ENCODE measurements at regions of chr9 and their contacts with region 1.

Region 1: GRCh38 chr9:12329623-12329985 is 363.6 kb upstream of the TYRP1 start:
- DNase-seq: no peak
- ATAC-seq: no peak
- H3K4me3 ChIP-seq: no peak overlapping the region
- H3K27ac ChIP-seq: no peak overlapping the region
- H3K4me1 ChIP-seq: peaks cover 7% of the 10 kb centered on the region; the same call in 1 of the 2 replicates
- H3K27me3 ChIP-seq: no peaks in the 10 kb centered on the region
- CTCF ChIP-seq: no peak
- EP300 ChIP-seq: no peak
- POLR2A ChIP-seq: no peak
- RAD21 ChIP-seq: no peak

Region 2: DNA sequence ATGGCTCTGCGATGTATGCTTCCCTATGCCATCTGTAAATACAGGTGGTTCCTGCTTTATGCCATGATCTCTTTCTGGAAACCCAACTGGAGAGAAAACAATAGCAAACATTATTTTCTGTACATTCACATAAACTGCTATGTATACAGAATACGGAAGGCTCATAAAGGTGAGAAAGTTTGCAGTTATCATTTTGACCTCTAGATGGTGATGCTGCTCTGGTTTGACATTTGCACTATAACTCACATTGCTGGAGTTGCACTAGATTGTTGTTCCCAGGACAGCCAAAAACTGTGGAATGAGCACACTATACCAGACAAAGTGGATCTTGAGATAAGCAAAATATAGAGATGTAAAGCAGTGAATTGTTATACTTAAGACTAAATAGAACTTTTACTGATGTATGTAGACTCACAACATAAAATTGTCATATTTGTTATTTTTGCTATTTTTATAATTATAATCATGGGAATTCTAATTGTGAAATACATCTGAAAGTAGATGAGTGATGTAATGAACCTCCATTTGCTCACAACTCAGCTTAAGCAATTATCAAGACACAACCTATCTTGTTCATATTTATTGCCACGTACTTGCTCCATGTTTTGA is 1963.3 kb before region 1 on chr9:
- CTCF ChIA-PET with region 1: interaction called, 11 read pairs
- POLR2A ChIA-PET with region 1: no interaction called
- in situ Hi-C with region 1: no loop called
- intact Hi-C with region 1: loop called (anchors 1 kb)
- DNase-seq: peak; percentile 32
- ATAC-seq: peak; percentile 89
- H3K4me3 ChIP-seq: no peak overlapping the region
- H3K27ac ChIP-seq: no peak overlapping the region
- H3K4me1 ChIP-seq: no peaks in the 10 kb centered on the region
- H3K27me3 ChIP-seq: no peaks in the 10 kb centered on the region
- CTCF ChIP-seq: peak; percentile 76
- EP300 ChIP-seq: no peak
- POLR2A ChIP-seq: no peak
- RAD21 ChIP-seq: 0 out of 2 replicates have a peak, but pooled peaks have one; percentile 19

Region 3: DNA sequence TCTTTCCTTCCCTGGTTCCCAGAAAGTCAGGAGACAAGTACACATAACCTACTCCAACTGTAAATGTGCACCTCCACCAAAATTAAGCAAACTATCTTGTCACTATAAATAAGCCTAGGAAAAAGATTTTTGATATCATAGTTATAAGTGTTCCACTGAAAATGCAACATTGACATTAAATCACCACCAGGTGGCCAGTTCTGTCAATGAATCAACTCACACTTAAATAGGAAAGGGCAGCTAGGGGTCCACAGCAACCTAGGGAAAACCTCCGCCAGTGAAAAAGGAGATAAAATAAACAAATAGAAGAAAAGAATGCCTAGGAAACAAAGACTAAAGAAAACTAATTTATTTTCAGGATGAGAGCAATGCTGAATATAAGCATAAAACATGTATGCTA is 1473.8 kb before region 1 on chr9:
- CTCF ChIA-PET with region 1: no interaction called
- POLR2A ChIA-PET with region 1: no interaction called
- in situ Hi-C with region 1: no loop called
- intact Hi-C with region 1: loop called (anchors 5 kb)
- DNase-seq: no peak
- ATAC-seq: no peak
- H3K4me3 ChIP-seq: no peak overlapping the region
- H3K27ac ChIP-seq: no peak overlapping the region
- H3K4me1 ChIP-seq: no peaks in the 10 kb centered on the region
- H3K27me3 ChIP-seq: no peaks in the 10 kb centered on the region
- CTCF ChIP-seq: no peak
- EP300 ChIP-seq: no peak
- POLR2A ChIP-seq: no peak
- RAD21 ChIP-seq: no peak

Region 4: DNA sequence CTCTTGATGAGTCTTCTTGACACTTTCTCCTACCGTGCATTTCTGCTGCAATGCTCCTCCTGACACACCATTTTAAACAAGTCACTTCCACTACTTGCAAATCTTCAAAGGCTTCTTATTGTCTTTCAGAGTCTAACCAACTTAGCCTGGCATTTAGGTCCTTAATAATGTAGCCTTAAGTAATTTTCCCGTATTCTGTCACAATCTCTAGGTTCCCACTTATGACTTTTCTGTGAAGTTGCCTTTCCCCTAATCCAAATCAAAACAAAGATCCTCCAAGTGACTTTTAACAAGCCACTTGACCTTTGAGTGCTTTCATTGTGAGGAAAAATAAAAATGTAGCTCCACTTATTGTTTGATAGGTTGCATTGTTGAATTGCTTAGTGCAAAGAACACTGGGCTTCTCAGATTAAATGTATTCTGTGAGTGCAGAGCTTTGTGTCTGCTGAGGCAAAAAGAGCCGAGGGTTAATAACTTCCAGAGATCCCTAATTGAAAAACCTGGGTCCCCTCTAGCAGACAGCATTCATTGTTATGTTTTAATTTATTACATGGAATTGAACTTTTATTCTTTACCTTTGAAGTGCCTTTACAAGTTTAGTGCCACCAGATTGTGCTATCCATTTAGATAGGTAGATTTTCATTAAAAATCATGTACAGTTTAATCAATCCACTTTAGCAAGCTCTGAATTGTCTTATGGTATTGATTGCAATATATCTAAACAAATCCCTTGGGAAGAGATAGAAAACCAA is 21.9 kb after region 1 on chr9:
- CTCF ChIA-PET with region 1: no interaction called
- POLR2A ChIA-PET with region 1: no interaction called
- in situ Hi-C with region 1: no loop called
- intact Hi-C with region 1: no loop called
- DNase-seq: no peak
- ATAC-seq: no peak
- H3K4me3 ChIP-seq: no peak overlapping the region
- H3K27ac ChIP-seq: no peak overlapping the region
- H3K4me1 ChIP-seq: no peaks in the 10 kb centered on the region
- H3K27me3 ChIP-seq: no peaks in the 10 kb centered on the region
- CTCF ChIP-seq: no peak
- EP300 ChIP-seq: no peak
- POLR2A ChIP-seq: no peak
- RAD21 ChIP-seq: no peak

Region 5: DNA sequence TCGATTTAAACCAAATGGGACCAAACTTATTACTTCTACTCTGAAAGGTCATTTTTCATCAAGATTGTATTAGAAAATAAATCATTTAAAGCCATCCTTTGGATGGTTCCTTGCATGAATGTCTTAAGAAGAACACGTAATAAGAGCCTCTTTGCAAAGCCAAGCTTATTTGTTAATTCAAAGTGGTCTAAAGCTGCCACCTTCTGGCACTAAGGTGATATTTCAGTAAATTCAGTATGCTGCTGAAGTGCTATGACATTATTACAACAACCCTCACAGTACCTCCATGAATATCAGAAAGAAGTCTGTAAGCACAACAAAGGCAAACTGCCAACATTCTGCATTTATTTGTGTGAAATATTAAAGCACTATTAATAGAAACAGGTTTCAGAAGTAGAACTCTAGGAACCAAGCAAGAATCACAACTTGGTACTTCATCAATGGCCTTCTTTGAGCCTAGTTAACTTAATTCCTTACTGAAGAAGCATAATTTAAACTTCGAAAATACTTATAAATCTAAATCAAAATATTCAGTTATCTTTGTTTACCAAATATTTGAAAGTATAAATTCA is 310.5 kb after region 1 on chr9:
- CTCF ChIA-PET with region 1: no interaction called
- POLR2A ChIA-PET with region 1: no interaction called
- in situ Hi-C with region 1: no loop called
- intact Hi-C with region 1: loop called (anchors 5 kb)
- DNase-seq: peak; percentile 27
- ATAC-seq: peak; percentile 69; the same call in 2 of the 3 replicates
- H3K4me3 ChIP-seq: no peak overlapping the region
- H3K27ac ChIP-seq: no peak overlapping the region
- H3K4me1 ChIP-seq: no peaks in the 10 kb centered on the region
- H3K27me3 ChIP-seq: no peaks in the 10 kb centered on the region
- CTCF ChIP-seq: peak; percentile 62
- EP300 ChIP-seq: no peak
- POLR2A ChIP-seq: no peak
- RAD21 ChIP-seq: no peak

Measured in HepG2 (cell line).